GM12878 (cell line): ENCODE measurements at regions of chrX and their contacts with region 1.

Region 1: DNA sequence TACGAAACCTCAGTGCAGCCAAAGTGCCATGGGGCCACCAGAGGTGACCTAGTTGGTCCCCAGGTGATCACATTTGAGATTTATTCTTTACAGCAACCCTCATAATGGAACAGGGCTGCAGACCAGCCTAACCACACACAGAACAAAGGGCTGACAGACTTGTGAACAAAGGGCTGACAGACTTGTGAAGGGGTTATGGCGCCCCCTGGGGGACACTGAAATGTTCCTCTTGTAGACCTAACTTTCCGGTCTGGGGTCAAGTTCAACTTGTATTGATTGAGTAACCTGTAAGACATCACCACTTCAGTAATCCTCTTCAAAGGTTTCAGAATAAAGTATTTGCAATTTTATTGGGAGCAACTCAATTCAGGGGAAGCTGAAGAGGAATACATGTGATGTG is 175.9 kb upstream of the RPS6KA3 start:
- DNase-seq: no peak
- ATAC-seq: peak; percentile 98
- H3K4me3 ChIP-seq: no peak overlapping the region
- H3K27ac ChIP-seq: no peak overlapping the region
- H3K4me1 ChIP-seq: peaks cover 3% of the 10 kb centered on the region; the same call in 1 of the 2 replicates
- H3K27me3 ChIP-seq: no peaks in the 10 kb centered on the region; a peak in 1 of 4 replicates
- CTCF ChIP-seq: peak; percentile 69 to 76 (median 71)
- EP300 ChIP-seq: no peak
- POLR2A ChIP-seq: no peak
- RAD21 ChIP-seq: peak; percentile 89

Region 2: GRCh38 chrX:20252381-20253231 is 190.0 kb before region 1 on chrX:
- CTCF ChIA-PET with region 1: interaction called, 27 read pairs
- POLR2A ChIA-PET with region 1: no interaction called
- RAD21 ChIA-PET with region 1: interaction called, 8 read pairs
- SMC1A ChIA-PET with region 1: interaction called, 14 read pairs
- in situ Hi-C with region 1: loop called (anchors 5 kb)
- intact Hi-C with region 1: loop called (anchors 1 kb)
- DNase-seq: no peak
- ATAC-seq: peak; percentile 94
- H3K4me3 ChIP-seq: no peak overlapping the region
- H3K27ac ChIP-seq: no peak overlapping the region
- H3K4me1 ChIP-seq: no peaks in the 10 kb centered on the region; the same call in 1 of the 2 replicates
- H3K27me3 ChIP-seq: no peaks in the 10 kb centered on the region
- CTCF ChIP-seq: peak; percentile 70 to 82 (median 77)
- EP300 ChIP-seq: no peak
- POLR2A ChIP-seq: no peak
- RAD21 ChIP-seq: peak; percentile 76

Region 3: DNA sequence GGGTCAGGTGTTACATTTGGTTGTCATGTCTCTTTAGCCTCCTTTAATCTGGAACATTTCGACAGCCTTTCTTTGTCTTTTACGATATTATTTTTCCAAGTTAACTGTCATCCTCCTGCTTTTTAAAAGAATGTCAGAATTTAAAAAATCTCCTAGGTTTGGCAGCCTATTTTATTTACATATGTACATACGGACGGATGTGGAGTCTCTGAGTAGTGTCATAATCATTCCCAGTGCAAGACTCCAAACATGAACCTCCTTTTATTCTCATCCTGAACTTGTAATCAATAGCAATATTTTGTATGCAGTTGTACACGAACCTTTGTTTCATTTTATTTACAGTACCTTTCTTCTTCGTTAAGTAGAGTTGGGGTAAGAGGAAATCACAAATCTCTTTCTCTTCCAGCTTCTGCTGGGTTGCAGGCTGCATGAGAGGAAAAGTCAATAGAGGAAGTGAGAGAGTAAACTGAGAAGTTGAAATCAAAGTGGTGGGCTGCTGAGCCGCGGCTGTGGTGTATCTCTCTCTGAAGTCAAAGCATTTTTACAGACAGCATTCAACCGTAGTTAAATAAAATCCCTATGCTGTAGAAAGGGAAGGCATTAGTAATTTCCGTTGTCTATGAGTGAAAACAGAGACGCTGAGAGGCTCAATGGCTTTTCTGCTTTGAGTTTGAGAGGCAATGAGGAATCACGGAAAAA is 122.0 kb before region 1 on chrX:
- CTCF ChIA-PET with region 1: no interaction called
- POLR2A ChIA-PET with region 1: no interaction called
- RAD21 ChIA-PET with region 1: no interaction called
- SMC1A ChIA-PET with region 1: no interaction called
- in situ Hi-C with region 1: no loop called
- intact Hi-C with region 1: loop called (anchors 5 kb)
- DNase-seq: peak; percentile 57
- ATAC-seq: peak; percentile 97
- H3K4me3 ChIP-seq: no peak overlapping the region
- H3K27ac ChIP-seq: no peak overlapping the region
- H3K4me1 ChIP-seq: peaks cover 4% of the 10 kb centered on the region; the same call in 1 of the 2 replicates
- H3K27me3 ChIP-seq: peaks cover 0 to 1% of the 10 kb centered on the region in 2 experiments; a peak in 1 of 4 replicates
- CTCF ChIP-seq: no peak
- EP300 ChIP-seq: peak; percentile 29 to 49; a peak in 2 of 4 replicates
- POLR2A ChIP-seq: no peak
- RAD21 ChIP-seq: no peak

Region 4: DNA sequence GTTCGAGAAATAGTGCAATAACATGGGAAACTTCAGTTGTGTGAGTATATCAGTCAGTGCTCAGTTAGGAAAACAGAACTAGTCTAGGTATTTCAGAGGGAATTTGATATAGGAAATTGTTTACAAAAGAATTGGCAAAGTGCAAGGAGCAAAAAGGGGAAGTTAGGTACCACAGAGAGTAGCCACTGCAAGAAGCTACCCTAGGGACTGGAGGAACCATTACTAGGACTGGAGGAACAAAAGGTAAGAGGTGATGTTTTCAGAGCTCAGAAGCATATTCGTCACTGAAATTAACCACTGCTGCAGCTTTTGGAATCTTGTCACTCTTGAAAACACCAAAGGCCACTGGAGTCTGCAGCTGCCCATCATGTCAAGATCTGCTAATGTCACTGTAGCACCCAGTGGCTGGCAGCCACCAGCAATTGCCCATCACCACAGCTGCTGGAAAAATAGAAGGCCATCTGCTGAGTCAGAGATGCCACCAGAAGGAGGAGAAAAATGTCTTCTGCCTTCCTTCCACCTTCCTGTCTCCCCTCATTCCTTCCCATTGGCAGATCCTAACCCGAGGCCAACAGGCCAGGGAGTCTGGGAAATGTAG is 15.3 kb before region 1 on chrX:
- CTCF ChIA-PET with region 1: interaction called, 3 read pairs
- POLR2A ChIA-PET with region 1: no interaction called
- RAD21 ChIA-PET with region 1: no interaction called
- SMC1A ChIA-PET with region 1: interaction called, 22 read pairs
- in situ Hi-C with region 1: no loop called
- intact Hi-C with region 1: no loop called
- DNase-seq: no peak
- ATAC-seq: peak; percentile 67
- H3K4me3 ChIP-seq: no peak overlapping the region
- H3K27ac ChIP-seq: no peak overlapping the region
- H3K4me1 ChIP-seq: no peaks in the 10 kb centered on the region
- H3K27me3 ChIP-seq: no peaks in the 10 kb centered on the region
- CTCF ChIP-seq: no peak
- EP300 ChIP-seq: no peak
- POLR2A ChIP-seq: no peak
- RAD21 ChIP-seq: no peak

Region 5: GRCh38 chrX:20680998-20681397 is 238.4 kb after region 1 on chrX:
- CTCF ChIA-PET with region 1: no interaction called
- POLR2A ChIA-PET with region 1: no interaction called
- RAD21 ChIA-PET with region 1: no interaction called
- SMC1A ChIA-PET with region 1: no interaction called
- in situ Hi-C with region 1: no loop called
- intact Hi-C with region 1: no loop called
- DNase-seq: no peak
- ATAC-seq: no peak
- H3K4me3 ChIP-seq: no peak overlapping the region
- H3K27ac ChIP-seq: no peak overlapping the region
- H3K4me1 ChIP-seq: no peaks in the 10 kb centered on the region
- H3K27me3 ChIP-seq: no peaks in the 10 kb centered on the region
- CTCF ChIP-seq: no peak
- EP300 ChIP-seq: no peak
- POLR2A ChIP-seq: no peak
- RAD21 ChIP-seq: no peak